Panc1 (cell line): ENCODE measurements at regions of chr10 and their contacts with region 1.

Region 1: GRCh38 chr10:125936331-125936730 is 40.0 kb downstream of the FANK1 start:
- DNase-seq: no peak
- ATAC-seq: no peak
- H3K4me3 ChIP-seq: no peak overlapping the region
- H3K27ac ChIP-seq: no peak overlapping the region
- H3K4me1 ChIP-seq: no peaks in the 10 kb centered on the region
- H3K27me3 ChIP-seq: no peaks in the 10 kb centered on the region
- CTCF ChIP-seq: no peak

Region 2: DNA sequence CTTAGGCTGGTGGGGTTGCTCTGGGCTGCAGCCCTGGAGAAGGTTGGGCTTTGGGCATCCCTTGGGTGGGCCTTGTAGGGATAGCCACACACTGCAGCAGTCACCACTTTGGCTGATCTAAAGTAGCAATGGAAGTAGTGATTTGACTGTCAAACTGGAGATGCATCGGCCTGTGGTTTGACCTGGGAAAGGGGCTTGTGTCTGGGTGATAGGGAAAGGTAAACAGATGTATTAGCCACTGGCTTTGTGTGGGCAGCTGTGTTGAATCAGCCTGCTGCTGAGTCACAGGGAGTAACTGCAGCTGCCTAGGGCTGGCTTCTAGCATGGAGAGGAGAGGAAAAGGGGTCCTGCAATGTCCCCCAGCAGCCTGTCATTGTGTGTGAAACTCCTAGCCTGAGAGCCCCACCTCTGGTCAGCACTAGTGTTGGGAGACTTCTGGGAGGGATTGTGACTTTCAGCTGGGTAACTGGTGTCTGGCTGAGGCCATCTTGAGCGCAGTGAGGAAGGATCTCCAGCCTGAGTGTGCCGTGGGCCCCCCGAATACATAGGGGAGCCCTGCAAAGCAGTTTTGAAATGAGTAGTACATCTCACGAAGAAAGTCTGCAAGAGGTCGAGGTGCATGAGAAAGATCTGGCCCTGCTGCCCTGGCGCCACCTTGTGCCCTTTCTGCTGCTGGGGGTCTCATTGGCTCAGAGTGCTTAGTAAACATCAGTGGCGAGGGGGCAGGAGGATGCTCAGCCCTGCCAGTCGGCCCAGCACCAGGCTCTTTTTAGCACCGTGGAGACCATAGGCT is 77.4 kb after region 1 on chr10:
- CTCF ChIA-PET with region 1: no interaction called
- POLR2A ChIA-PET with region 1: no interaction called
- in situ Hi-C with region 1: no loop called
- intact Hi-C with region 1: no loop called
- DNase-seq: peak; percentile 43
- ATAC-seq: peak; percentile 93
- H3K4me3 ChIP-seq: no peak overlapping the region
- H3K27ac ChIP-seq: peak overlapping the region; percentile 68
- H3K4me1 ChIP-seq: peaks cover 14% of the 10 kb centered on the region
- H3K27me3 ChIP-seq: no peaks in the 10 kb centered on the region
- CTCF ChIP-seq: peak; percentile 78

Region 3: DNA sequence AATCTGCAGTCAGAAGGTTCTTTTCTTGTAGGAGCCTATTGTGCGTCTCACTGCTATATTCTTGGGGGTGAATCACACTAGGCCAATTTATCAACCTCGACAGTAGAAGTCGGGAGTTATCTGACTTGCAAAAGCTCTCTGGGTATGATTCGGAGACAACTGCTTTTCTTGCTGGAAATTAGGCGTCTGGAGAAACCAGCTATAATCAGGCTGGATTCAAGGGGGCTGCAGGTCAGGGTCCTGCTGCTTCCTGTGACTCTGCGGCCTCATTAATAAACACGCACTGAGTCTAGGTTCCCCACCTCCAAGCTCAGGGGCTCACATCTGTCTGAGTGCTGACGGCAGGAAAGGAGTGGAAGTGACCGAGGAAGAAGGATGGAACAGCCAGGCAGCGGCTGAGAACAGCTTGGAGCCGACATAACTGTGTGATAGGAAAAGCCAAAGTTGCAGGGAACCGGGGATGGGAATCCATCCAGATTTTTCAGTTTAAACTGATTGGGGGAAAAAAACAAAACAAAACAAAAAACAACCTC is 144.6 kb after region 1 on chr10:
- CTCF ChIA-PET with region 1: no interaction called
- POLR2A ChIA-PET with region 1: no interaction called
- in situ Hi-C with region 1: no loop called
- intact Hi-C with region 1: no loop called
- DNase-seq: no peak
- ATAC-seq: no peak
- H3K4me3 ChIP-seq: no peak overlapping the region
- H3K27ac ChIP-seq: no peak overlapping the region
- H3K4me1 ChIP-seq: no peaks in the 10 kb centered on the region
- H3K27me3 ChIP-seq: no peaks in the 10 kb centered on the region
- CTCF ChIP-seq: no peak

Region 4: DNA sequence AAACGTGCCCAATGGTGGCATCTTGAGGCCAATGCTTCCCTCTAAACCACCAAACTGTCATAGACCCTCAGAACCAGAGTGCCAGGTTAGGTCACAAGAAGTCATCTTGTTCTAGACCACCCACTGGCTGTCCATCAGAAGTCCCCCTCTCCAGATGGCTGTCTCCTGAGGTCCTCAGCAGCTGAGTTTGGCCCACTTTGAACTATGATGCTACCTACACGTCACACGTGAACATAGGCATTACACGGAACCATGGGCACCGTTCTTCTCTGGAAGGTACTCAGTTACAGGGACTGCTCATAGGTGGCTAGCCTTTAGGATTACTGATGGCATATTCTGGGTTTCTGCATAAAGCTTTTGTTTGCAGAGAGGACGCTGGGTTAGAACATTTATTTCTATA is 285.5 kb after region 1 on chr10:
- CTCF ChIA-PET with region 1: no interaction called
- POLR2A ChIA-PET with region 1: interaction called, 13 read pairs
- in situ Hi-C with region 1: no loop called
- intact Hi-C with region 1: no loop called
- DNase-seq: no peak
- ATAC-seq: no peak
- H3K4me3 ChIP-seq: no peak overlapping the region
- H3K27ac ChIP-seq: no peak overlapping the region
- H3K4me1 ChIP-seq: no peaks in the 10 kb centered on the region
- H3K27me3 ChIP-seq: no peaks in the 10 kb centered on the region
- CTCF ChIP-seq: no peak

Region 5: DNA sequence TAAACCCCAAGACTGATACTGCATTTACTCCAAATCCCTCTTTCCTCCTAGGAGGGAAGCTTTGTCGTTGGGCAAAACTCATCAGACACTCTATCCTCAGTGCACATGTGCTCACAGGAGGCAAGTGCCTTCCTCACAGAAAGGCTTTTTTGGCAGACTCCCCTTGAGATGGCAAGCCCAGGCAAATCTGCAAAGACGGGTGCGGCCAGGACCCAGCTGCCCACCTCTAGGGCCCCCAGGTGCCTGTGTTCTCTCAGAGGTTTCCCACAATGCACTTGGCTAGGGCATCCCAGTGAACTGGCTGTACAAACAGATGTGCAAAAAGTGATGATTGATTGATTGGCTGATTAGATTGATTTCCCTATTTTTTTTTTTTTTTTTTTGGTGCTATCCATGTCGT is 349.3 kb after region 1 on chr10:
- CTCF ChIA-PET with region 1: no interaction called
- POLR2A ChIA-PET with region 1: interaction called, 12 read pairs
- in situ Hi-C with region 1: no loop called
- intact Hi-C with region 1: no loop called
- DNase-seq: no peak
- ATAC-seq: no peak
- H3K4me3 ChIP-seq: no peak overlapping the region
- H3K27ac ChIP-seq: no peak overlapping the region
- H3K4me1 ChIP-seq: no peaks in the 10 kb centered on the region
- H3K27me3 ChIP-seq: no peaks in the 10 kb centered on the region
- CTCF ChIP-seq: no peak

Region 6: DNA sequence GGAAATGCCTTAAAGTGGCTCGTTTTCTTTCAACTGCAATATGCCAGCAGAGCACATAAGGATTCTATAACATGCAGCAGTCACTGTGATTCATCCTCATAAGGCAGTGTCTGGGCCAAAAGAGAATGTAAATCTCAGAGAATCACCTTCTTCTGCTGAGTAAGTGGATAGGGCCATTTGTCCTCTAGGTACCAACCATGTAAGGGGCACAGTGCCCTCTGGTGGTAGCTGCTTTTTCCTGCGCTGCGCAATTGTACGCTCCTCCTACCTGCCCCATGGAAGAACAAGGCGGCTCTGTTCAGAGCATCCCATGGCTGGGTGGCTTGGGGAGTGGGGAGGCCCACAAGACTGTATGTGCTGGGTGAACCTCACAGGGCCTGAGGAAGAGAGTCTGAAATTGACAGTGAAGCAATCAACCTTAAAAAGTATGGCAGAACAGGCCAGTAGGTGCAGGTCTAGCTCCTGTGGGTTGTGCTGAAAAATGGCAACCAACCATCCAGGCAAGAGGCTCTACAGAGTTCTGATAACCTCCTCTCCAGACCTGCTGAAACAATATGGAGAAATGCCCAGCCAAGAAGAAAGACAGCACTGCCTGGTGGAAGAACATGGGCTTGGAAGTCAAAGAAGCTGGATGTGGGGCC is 812.8 kb after region 1 on chr10:
- CTCF ChIA-PET with region 1: interaction called, 4 read pairs
- POLR2A ChIA-PET with region 1: no interaction called
- in situ Hi-C with region 1: no loop called
- intact Hi-C with region 1: loop called (anchors 10 kb)
- DNase-seq: peak; percentile 53
- ATAC-seq: peak; percentile 100
- H3K4me3 ChIP-seq: no peak overlapping the region
- H3K27ac ChIP-seq: no peak overlapping the region
- H3K4me1 ChIP-seq: no peaks in the 10 kb centered on the region
- H3K27me3 ChIP-seq: no peaks in the 10 kb centered on the region
- CTCF ChIP-seq: peak; percentile 92

Region 7: GRCh38 chr10:126839094-126839761 is 902.9 kb after region 1 on chr10:
- CTCF ChIA-PET with region 1: no interaction called
- POLR2A ChIA-PET with region 1: no interaction called
- in situ Hi-C with region 1: no loop called
- intact Hi-C with region 1: no loop called
- DNase-seq: no peak
- ATAC-seq: no peak
- H3K4me3 ChIP-seq: no peak overlapping the region
- H3K27ac ChIP-seq: no peak overlapping the region
- H3K4me1 ChIP-seq: no peaks in the 10 kb centered on the region
- H3K27me3 ChIP-seq: 0 out of 2 replicates have a peak, but pooled peaks cover 3% of the 10 kb centered on the region
- CTCF ChIP-seq: no peak